ENCODE measurements at regions of chr17 and their contacts with region 1.

Region 1: GRCh38 chr17:28357061-28357900 is at the start of gene POLDIP2:
- DNase-seq: peak; percentile 87
- ATAC-seq: peak; percentile 99
- H3K4me3 ChIP-seq: peak within 1 kb of the TSS; percentile 93 to 98 (median 97)
- H3K27ac ChIP-seq: peak within 1 kb of the TSS; percentile 78
- H3K4me1 ChIP-seq: peaks cover 36% of the 10 kb centered on the region
- H3K27me3 ChIP-seq: no peaks in the 10 kb centered on the region; a peak in 1 of 5 replicates
- CTCF ChIP-seq: peak; percentile 24; the same call in 1 of the 2 replicates
- EP300 ChIP-seq: peak in 1 of 2 experiments; percentile 48; a peak in 1 of 4 replicates
- POLR2A ChIP-seq: peak; percentile 83 to 93
- RAD21 ChIP-seq: peak; percentile 73
- total RNA-seq, gene POLDIP2: 114 and 127 TPM in 2 replicates

Region 2: DNA sequence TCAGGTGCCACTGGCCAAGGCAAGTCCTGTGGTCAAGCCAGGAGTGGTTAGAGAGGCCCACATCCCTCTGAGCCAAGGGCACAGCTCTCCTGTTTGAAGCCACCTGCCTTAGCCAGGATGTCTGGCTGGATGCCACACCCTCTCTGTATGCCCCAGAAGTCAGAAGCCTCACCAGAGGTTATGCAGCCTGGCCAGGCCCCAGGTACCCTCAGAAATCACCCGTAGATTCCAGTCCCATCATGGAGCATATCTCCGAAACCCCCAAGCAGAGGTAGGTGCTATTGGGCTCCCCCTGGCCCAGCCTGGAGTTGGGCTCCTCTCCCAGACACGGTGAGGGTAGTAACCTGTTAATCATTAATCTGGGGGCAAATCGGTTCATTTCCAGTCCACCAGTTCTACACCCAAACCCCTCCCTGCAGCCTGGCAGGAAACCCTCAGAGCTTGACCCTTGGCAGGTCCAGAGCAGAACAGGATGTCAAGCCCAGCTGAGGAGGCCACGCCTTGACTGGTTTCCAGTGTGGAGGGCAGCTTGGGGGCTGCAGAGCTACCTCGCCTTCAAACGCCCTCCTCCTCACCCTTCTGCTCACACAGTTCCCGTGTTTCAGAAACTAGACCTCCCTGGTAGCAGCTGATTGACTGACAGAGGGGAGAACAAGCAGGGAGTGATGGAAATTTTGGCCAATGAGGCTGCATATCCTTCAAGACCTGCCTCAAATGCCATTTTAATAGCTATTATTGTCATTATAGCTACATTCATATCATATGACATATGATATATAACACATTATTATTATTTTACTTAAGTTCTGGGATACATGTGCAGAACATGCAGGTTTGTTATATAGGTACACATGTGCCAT is 98.7 kb before region 1 on chr17:
- CTCF ChIA-PET with region 1: no interaction called
- POLR2A ChIA-PET with region 1: no interaction called
- in situ Hi-C with region 1: no loop called
- intact Hi-C with region 1: no loop called
- DNase-seq: peak; percentile 78
- ATAC-seq: peak; percentile 92
- H3K4me3 ChIP-seq: peak overlapping the region in 1 of 3 experiments; percentile 54; a peak in 2 of 6 replicates
- H3K27ac ChIP-seq: no peak overlapping the region
- H3K4me1 ChIP-seq: peaks cover 56% of the 10 kb centered on the region
- H3K27me3 ChIP-seq: no peaks in the 10 kb centered on the region
- CTCF ChIP-seq: no peak
- EP300 ChIP-seq: no peak
- POLR2A ChIP-seq: no peak
- RAD21 ChIP-seq: no peak

Region 3: DNA sequence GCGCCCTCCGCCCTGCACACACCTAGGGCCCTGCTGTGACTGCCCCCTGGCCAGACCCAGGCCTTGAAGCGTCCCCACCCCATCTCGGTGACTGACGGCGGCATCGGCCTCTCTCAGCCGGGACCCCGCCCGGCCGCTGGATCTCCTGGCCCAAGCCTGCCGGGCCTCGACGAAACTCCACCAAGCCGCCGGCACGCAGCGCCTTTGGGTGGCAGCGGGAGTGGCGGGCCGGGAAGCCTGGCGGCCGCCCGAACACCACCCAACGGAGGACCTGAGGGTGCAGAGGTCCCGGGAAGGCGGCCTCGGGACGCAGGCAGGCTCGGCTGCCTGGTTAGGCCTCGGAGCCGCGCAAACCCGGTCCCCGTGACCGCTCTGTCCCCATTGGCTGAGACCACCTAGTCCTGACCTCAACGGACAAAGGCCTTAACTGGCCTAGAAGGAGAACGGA is 50.3 kb before region 1 on chr17:
- CTCF ChIA-PET with region 1: no interaction called
- POLR2A ChIA-PET with region 1: no interaction called
- in situ Hi-C with region 1: no loop called
- intact Hi-C with region 1: no loop called
- DNase-seq: no peak
- ATAC-seq: no peak
- H3K4me3 ChIP-seq: no peak overlapping the region
- H3K27ac ChIP-seq: no peak overlapping the region
- H3K4me1 ChIP-seq: peaks cover 10% of the 10 kb centered on the region; the same call in 1 of the 2 replicates
- H3K27me3 ChIP-seq: peaks cover 0 to 6% of the 10 kb centered on the region in 2 experiments; a peak in 2 of 5 replicates
- CTCF ChIP-seq: no peak
- EP300 ChIP-seq: no peak
- POLR2A ChIP-seq: no peak
- RAD21 ChIP-seq: no peak

Region 4: DNA sequence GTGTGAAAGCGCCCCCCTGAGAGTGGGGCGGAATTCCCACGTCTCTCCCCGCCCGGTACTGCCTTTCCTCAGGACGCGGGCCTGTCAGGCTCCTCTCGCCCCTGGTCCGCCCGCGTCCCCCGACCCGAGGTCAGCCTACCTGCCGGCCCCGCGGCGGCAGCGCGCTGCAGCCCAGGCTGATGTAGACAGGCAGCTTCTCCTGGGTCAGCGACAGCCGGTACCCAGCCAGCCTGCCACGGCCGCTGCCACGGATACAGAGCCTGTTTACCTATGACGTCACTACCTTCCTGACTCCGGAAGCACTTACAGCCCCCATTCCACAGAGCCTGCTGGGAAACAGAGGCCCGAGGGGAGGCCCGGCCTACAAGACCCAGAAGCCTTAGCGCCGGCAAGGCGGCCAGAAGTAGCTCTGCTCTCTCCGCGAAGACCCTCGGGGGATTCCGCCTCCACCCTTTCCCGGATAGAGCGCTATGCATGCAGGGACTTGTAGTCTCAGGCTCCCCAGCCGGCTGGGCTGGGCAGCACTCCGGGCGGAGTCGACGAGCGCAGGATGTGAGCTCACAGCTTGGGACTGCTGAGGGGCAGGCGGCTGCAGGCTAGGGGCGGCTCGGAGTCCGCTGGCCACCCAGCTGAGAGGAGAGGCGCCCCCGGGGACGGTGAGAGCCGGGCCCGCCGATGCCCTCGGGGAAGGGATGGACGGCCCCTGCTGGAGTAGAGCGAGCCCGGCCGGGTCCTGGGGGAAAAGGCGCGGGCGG is 21.9 kb before region 1 on chr17 and contains the starts of genes IFT20 and TNFAIP1:
- CTCF ChIA-PET with region 1: no interaction called
- POLR2A ChIA-PET with region 1: interaction called, 68 read pairs
- in situ Hi-C with region 1: no loop called
- intact Hi-C with region 1: no loop called
- DNase-seq: peak; percentile 99
- ATAC-seq: peak; percentile 97
- H3K4me3 ChIP-seq: peak within 1 kb of the TSS; percentile 92 to 94 (median 93)
- H3K27ac ChIP-seq: peak within 1 kb of the TSS; percentile 72
- H3K4me1 ChIP-seq: peaks cover 46% of the 10 kb centered on the region
- H3K27me3 ChIP-seq: no peaks in the 10 kb centered on the region; a peak in 1 of 5 replicates
- CTCF ChIP-seq: peak; percentile 49
- EP300 ChIP-seq: 0 out of 4 replicates have a peak, but pooled peaks of 1 of the 2 experiments have one; percentile 34
- POLR2A ChIP-seq: peak; percentile 42 to 87; a peak in 3 of 4 replicates
- RAD21 ChIP-seq: peak; percentile 26; the same call in 1 of the 2 replicates
- total RNA-seq, gene IFT20: 23.4 and 28.0 TPM in 2 replicates
- total RNA-seq, gene TNFAIP1: 17.5 and 18.7 TPM in 2 replicates

Region 5: DNA sequence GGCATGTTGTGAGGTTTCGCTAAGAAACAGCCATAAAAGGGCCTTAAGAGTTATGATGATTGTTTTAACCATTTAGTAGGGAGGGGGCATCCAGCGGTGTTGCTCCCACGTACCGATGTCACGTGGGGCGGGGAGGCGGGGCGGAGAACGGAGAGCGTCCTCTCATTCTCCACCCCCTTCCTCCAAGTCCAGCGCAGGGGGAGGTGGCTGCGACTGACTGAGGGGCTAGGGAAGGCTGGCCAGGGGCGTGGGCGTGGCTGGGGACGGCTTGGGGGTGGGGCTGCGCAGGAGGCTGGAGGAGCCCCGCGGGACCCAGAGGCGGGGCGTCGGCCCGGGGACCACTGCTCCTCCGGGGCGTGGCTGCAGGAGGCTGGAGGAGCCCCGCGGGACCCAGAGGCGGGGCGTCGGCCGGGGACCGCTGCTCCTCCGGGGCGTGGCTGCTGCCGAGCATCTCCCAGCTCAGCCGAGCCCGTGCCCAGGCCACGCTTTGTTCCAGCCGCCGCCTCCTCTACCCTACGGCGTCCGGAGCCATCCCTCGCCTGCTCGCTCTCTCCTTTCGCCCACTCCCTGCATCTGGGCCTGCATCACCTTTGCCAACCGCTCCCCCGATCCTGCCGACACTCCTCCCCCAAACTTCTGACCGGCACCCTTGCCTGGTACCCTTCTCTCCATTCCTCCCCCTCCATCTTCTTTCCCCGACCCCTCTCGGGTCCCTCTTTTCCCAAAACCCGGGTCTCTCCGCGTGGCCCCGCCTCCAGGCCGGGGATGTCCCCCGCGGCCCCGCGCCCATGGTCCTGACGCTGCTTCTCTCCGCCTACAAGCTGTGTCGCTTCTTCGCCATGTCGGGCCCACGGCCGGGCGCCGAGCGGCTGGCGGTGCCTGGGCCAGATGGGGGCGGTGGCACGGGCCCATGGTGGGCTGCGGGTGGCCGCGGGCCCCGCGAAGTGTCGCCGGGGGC is 14.2 kb after region 1 on chr17 and contains the start of gene SARM1:
- CTCF ChIA-PET with region 1: no interaction called
- POLR2A ChIA-PET with region 1: interaction called, 183 read pairs
- in situ Hi-C with region 1: no loop called
- intact Hi-C with region 1: no loop called
- DNase-seq: peak; percentile 75
- ATAC-seq: peak; percentile 42
- H3K4me3 ChIP-seq: peak within 1 kb of the TSS; percentile 23 to 77 (median 30); a peak in 5 of 6 replicates
- H3K27ac ChIP-seq: peak within 1 kb of the TSS; percentile 92
- H3K4me1 ChIP-seq: peaks cover 47% of the 10 kb centered on the region
- H3K27me3 ChIP-seq: no peaks in the 10 kb centered on the region
- CTCF ChIP-seq: no peak
- EP300 ChIP-seq: no peak; a peak in 1 of 4 replicates
- POLR2A ChIP-seq: peak in 1 of 2 experiments; percentile 49; a peak in 2 of 4 replicates
- RAD21 ChIP-seq: no peak
- total RNA-seq, gene SARM1: 0.25 and 0.73 TPM in 2 replicates

Region 6: GRCh38 chr17:28398280-28398981 is 41.1 kb after region 1 on chr17:
- CTCF ChIA-PET with region 1: no interaction called
- POLR2A ChIA-PET with region 1: interaction called, 18 read pairs
- in situ Hi-C with region 1: no loop called
- intact Hi-C with region 1: no loop called
- DNase-seq: peak; percentile 8
- ATAC-seq: peak; percentile 73
- H3K4me3 ChIP-seq: no peak overlapping the region
- H3K27ac ChIP-seq: peak overlapping the region; percentile 31
- H3K4me1 ChIP-seq: peaks cover 40% of the 10 kb centered on the region
- H3K27me3 ChIP-seq: no peaks in the 10 kb centered on the region
- CTCF ChIP-seq: no peak
- EP300 ChIP-seq: no peak
- POLR2A ChIP-seq: no peak
- RAD21 ChIP-seq: no peak

Region 7: GRCh38 chr17:28416703-28417311 is 59.5 kb after region 1 on chr17:
- CTCF ChIA-PET with region 1: no interaction called
- POLR2A ChIA-PET with region 1: interaction called, 17 read pairs
- in situ Hi-C with region 1: no loop called
- intact Hi-C with region 1: no loop called
- DNase-seq: peak; percentile 87
- ATAC-seq: peak; percentile 99
- H3K4me3 ChIP-seq: no peak overlapping the region; a peak in 1 of 6 replicates
- H3K27ac ChIP-seq: no peak overlapping the region
- H3K4me1 ChIP-seq: peaks cover 22% of the 10 kb centered on the region
- H3K27me3 ChIP-seq: 0 out of 5 replicates have a peak, but pooled peaks cover 0 to 7% of the 10 kb centered on the region in 2 experiments
- CTCF ChIP-seq: peak; percentile 96
- EP300 ChIP-seq: no peak
- POLR2A ChIP-seq: no peak
- RAD21 ChIP-seq: peak; percentile 83

Region 8: DNA sequence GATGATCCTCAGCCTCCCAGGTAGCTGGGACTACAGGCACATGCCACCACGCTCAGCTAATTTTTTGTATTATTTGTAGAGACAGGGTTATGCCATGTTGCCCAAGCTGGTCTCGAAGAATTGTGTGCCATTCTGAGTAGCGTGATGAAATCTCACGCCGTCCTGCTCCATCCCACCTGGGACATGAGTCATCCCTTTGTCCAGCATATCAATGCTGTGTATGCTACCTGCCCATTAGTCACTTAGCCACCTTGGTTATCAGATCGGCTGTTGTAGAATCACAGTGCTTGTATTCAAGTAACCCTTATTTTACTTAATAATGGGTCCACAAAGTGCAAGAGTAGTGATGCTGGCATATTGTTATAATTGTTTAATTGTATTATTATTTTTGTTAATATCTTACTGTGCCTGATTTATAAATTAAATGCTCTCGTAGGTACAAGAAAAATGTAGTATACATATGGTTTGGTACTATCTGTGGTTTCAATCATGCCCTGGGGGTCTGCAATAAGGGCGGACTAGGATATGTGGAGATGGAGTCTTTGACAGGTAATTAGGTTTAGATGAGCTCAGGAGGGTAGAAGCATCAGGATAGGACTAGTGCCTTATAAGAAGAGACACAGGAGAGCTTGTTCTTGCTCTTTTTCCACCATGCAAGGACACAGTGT is 89.6 kb after region 1 on chr17:
- CTCF ChIA-PET with region 1: no interaction called
- POLR2A ChIA-PET with region 1: no interaction called
- in situ Hi-C with region 1: no loop called
- intact Hi-C with region 1: no loop called
- DNase-seq: no peak
- ATAC-seq: no peak
- H3K4me3 ChIP-seq: no peak overlapping the region
- H3K27ac ChIP-seq: no peak overlapping the region
- H3K4me1 ChIP-seq: no peaks in the 10 kb centered on the region
- H3K27me3 ChIP-seq: no peaks in the 10 kb centered on the region; a peak in 1 of 5 replicates
- CTCF ChIP-seq: no peak
- EP300 ChIP-seq: no peak
- POLR2A ChIP-seq: no peak
- RAD21 ChIP-seq: no peak